T-cell (primary cell): ENCODE measurements at regions of chr3 and their contacts with region 1.

Region 1: GRCh38 chr3:105806361-105806760 is 62.5 kb downstream of the CBLB start:
- DNase-seq: peak in 5 of 35 experiments; percentile 9 to 66 (median 10)
- ATAC-seq: peak; percentile 75 to 97 (median 94)
- H3K4me3 ChIP-seq: no peak overlapping the region
- H3K4me3 Mint-ChIP-seq: no peak overlapping the region
- H3K27ac ChIP-seq: no peak overlapping the region
- H3K27ac Mint-ChIP-seq: peak overlapping the region; percentile 29 to 48
- H3K4me1 ChIP-seq: peaks cover 2 to 9% of the 10 kb centered on the region in 2 experiments
- H3K4me1 Mint-ChIP-seq: peaks cover 76 to 78% (median 77%) of the 10 kb centered on the region in 3 donors
- H3K27me3 ChIP-seq: no peaks in the 10 kb centered on the region
- H3K27me3 Mint-ChIP-seq: no peaks in the 10 kb centered on the region

Region 2: DNA sequence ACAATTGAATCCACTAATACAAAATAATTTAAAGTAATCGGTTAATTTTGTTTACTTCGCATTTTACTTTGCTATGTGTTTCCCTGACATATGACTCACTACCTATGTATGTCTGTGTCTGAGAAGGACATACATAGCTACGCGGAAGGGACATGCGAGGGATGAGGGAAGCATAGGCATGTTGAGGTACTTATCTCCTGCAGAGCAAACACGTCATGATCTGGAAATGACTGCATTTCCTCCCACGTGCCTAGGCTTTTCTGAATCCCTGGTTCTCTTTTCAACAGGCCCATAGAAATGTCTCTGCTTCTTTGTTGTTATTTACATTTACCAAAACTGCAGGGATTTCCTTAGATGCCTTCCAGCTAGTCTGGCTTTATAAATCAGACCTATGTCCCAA is 412.2 kb before region 1 on chr3:
- CTCF ChIA-PET with region 1: no interaction called
- POLR2A ChIA-PET with region 1: no interaction called
- DNase-seq: no peak
- ATAC-seq: no peak
- H3K4me3 ChIP-seq: no peak overlapping the region
- H3K4me3 Mint-ChIP-seq: no peak overlapping the region
- H3K27ac ChIP-seq: no peak overlapping the region
- H3K27ac Mint-ChIP-seq: no peak overlapping the region
- H3K4me1 ChIP-seq: no peaks in the 10 kb centered on the region
- H3K4me1 Mint-ChIP-seq: no peaks in the 10 kb centered on the region
- H3K27me3 ChIP-seq: no peaks in the 10 kb centered on the region
- H3K27me3 Mint-ChIP-seq: no peaks in the 10 kb centered on the region

Region 3: GRCh38 chr3:105788593-105788992 is 17.8 kb before region 1 on chr3:
- CTCF ChIA-PET with region 1: interaction called, 5 to 10 read pairs
- POLR2A ChIA-PET with region 1: interaction called, 3 to 6 read pairs
- DNase-seq: no peak
- ATAC-seq: no peak
- H3K4me3 ChIP-seq: no peak overlapping the region
- H3K4me3 Mint-ChIP-seq: no peak overlapping the region
- H3K27ac ChIP-seq: no peak overlapping the region
- H3K27ac Mint-ChIP-seq: no peak overlapping the region
- H3K4me1 ChIP-seq: peaks cover 6 to 17% of the 10 kb centered on the region in 2 experiments
- H3K4me1 Mint-ChIP-seq: peaks cover 65 to 78% (median 74%) of the 10 kb centered on the region in 3 donors
- H3K27me3 ChIP-seq: no peaks in the 10 kb centered on the region
- H3K27me3 Mint-ChIP-seq: no peaks in the 10 kb centered on the region

Region 4: DNA sequence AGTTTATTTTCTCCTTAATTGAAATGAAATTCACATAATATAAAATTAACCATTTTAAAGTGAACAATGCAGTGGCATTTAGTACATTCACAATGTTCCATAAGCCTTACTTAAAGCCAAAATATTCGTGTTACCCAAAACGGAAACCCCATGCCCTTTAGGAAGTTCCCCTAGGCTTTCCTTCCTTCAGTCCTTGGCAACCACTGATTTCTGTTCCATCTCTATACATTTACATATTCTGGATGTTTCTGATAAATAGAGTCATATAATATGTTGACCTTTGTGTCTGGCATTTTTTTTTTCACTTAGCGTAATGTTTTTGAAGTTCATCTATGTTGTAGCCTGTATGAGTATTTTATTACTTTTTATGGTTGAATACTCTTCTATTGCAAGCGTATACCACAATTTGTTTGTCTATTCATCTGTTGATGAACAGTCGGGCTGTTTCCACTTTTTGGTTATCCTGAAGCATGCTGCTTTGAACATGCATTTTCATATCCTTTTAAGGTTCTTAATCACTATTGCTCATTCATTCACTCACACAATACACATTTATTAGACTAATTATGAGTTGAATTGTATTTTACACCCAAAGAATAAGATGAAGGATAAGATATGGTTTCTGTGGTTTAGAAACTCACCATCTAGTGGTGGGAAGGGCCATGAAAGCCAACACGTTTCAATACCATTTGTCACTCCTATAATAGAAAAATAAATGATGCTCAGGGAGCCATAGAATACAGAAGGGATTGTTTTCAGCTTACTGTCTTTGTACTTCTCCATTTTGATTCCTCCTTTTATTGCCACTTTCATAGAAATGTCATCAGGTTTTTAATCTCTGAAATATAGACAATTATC is 470.6 kb after region 1 on chr3:
- CTCF ChIA-PET with region 1: no interaction called
- POLR2A ChIA-PET with region 1: no interaction called
- DNase-seq: peak in 1 of 35 experiments; percentile 7
- ATAC-seq: no peak
- H3K4me3 ChIP-seq: no peak overlapping the region
- H3K4me3 Mint-ChIP-seq: no peak overlapping the region
- H3K27ac ChIP-seq: no peak overlapping the region
- H3K27ac Mint-ChIP-seq: no peak overlapping the region
- H3K4me1 ChIP-seq: no peaks in the 10 kb centered on the region
- H3K4me1 Mint-ChIP-seq: peaks cover 0 to 15% (median 12%) of the 10 kb centered on the region in 3 donors
- H3K27me3 ChIP-seq: no peaks in the 10 kb centered on the region
- H3K27me3 Mint-ChIP-seq: no peaks in the 10 kb centered on the region